ENCODE measurements at regions of chr17 and their contacts with region 1.

Region 1: DNA sequence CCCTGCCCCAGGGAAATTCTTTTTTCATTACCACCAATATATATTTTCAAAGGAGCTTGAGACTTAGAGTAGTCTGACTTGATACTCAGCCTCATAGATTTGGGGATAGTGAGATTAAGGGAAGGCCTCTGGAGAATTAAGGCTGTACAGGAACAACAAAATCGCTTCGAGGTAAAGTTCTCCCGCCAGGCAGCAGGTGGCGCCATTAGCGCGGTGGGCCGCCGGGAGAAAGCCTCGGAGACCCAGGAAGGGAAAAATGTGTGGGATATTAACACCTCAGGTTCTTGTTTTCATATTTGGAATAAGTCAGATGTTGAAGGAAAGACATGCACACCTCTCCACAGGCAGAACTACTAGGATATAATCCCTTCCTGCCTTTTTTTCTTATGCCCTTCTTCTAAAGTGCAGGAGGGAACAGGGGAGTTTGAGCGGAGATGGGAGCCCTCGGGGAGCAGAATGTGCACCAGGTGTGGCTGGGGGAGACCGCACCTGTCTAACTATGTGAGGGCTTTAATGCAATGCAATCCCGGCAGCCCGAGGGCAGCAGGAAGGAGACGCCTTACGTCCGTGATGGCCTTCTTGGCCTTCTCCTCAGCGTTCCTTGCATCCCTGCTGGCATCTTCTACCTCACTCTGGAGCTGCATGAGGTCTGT is 25.9 kb downstream of the MYH3 start:
- DNase-seq: no peak
- H3K4me3 ChIP-seq: no peak overlapping the region
- H3K27ac ChIP-seq: no peak overlapping the region
- H3K27me3 ChIP-seq: no peaks in the 10 kb centered on the region
- CTCF ChIP-seq: peak; percentile 88

Region 2: GRCh38 chr17:10394201-10394887 is 236.8 kb before region 1 on chr17:
- CTCF ChIA-PET with region 1: no interaction called
- POLR2A ChIA-PET with region 1: no interaction called
- DNase-seq: no peak
- H3K4me3 ChIP-seq: no peak overlapping the region
- H3K27ac ChIP-seq: no peak overlapping the region
- H3K27me3 ChIP-seq: no peaks in the 10 kb centered on the region
- CTCF ChIP-seq: no peak

Region 3: GRCh38 chr17:10821064-10821463 is 189.9 kb after region 1 on chr17:
- CTCF ChIA-PET with region 1: no interaction called
- POLR2A ChIA-PET with region 1: no interaction called
- DNase-seq: no peak
- H3K4me3 ChIP-seq: no peak overlapping the region
- H3K27ac ChIP-seq: no peak overlapping the region
- H3K27me3 ChIP-seq: no peaks in the 10 kb centered on the region
- CTCF ChIP-seq: no peak

Region 4: GRCh38 chr17:10844621-10845387 is 213.6 kb after region 1 on chr17:
- CTCF ChIA-PET with region 1: interaction called, 22 read pairs
- POLR2A ChIA-PET with region 1: no interaction called
- DNase-seq: peak; percentile 24
- H3K4me3 ChIP-seq: peak overlapping the region; percentile 54
- H3K27ac ChIP-seq: no peak overlapping the region
- H3K27me3 ChIP-seq: no peaks in the 10 kb centered on the region
- CTCF ChIP-seq: peak; percentile 92

Region 5: DNA sequence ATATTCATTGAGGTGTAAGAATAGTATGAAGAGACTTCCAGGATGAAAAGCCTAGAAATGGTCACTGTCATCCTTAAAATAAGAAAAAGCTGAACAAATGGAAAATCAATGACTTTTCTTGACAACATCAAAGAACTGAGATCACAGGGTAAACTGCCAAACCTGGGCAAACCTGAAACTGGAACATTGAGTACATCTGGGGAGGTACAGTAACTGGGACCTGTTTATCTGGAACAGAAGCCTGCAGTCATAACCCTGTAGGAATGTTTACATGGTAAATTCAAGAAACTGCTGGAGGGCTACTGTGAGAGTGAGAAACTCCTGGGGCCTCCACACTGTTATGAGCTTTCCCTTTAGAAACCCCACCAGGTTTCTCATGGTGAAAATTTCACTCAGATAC is 336.8 kb after region 1 on chr17:
- CTCF ChIA-PET with region 1: no interaction called
- POLR2A ChIA-PET with region 1: no interaction called
- DNase-seq: no peak
- H3K4me3 ChIP-seq: no peak overlapping the region
- H3K27ac ChIP-seq: no peak overlapping the region
- H3K27me3 ChIP-seq: no peaks in the 10 kb centered on the region
- CTCF ChIP-seq: no peak

Measured in AG04450 (cell line).